CD4-positive, alpha-beta T cell (primary cell): ENCODE measurements at regions of chr20 and their contacts with region 1.

Region 1: GRCh38 chr20:35699127-35699975 is at the starts of genes NFS1 and ROMO1:
- DNase-seq: peak; percentile 77 to 94 (median 82)
- ATAC-seq: peak; percentile 89
- H3K4me3 ChIP-seq: peak within 1 kb of the TSS; percentile 95
- H3K4me3 Mint-ChIP-seq: peak within 1 kb of the TSS; percentile 95
- H3K27ac ChIP-seq: peak within 1 kb of the TSS; percentile 93 to 97
- H3K27ac Mint-ChIP-seq: peak within 1 kb of the TSS; percentile 84
- H3K4me1 ChIP-seq: peaks cover 23% of the 10 kb centered on the region
- H3K4me1 Mint-ChIP-seq: peaks cover 52% of the 10 kb centered on the region
- H3K27me3 ChIP-seq: no peaks in the 10 kb centered on the region
- H3K27me3 Mint-ChIP-seq: no peaks in the 10 kb centered on the region
- CTCF ChIP-seq: peak; percentile 11
- total RNA-seq, gene NFS1: 10.6 to 11.5 TPM
- total RNA-seq, gene ROMO1: 32.9 to 35.8 TPM

Region 2: DNA sequence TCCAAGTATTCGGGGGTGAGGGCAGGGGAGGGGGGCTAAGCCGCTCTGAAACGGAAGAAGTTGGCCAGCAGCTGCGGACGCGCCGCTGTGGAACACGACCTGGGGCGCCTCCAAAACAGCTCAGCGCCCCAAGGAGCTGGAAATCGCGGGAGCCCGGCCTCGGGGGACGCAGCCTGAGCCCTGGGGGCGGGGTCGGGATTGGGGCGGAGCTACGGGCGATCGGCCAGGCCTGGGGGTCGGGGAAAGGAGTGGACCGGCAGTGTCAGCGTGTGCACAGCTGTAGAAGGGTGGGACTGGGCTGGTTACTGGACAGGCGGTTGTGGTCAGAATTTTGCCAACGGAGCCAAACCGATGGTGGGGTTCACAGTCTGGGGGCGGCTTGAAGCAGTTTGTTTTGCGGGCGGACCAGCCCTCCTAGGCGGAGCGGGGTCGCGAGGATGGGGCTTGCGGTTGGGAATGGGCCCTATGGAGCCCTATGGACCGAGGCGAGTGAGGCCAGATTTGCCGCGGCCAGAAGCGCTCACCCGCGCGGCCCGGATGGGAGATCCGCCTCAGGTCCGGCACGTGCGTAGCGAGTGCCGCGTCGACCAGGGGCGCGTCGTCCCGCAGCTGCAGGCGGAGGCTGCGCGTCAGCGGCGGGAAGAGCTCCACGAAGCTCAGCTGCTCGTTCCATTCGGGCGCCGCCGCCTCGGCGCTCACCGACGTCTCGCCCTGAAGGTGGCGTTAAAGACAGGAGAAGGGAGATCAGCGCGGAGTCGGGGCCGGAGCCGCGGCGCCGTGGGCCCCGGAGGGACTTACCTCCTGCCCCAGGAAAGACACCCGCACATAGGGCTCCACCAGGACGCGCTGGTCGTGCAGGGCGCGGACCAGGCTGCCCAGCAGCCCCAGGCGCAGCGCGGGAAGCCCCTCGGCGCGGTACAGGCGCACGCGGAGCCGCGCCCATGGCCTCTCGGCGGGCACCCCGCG is 98.1 kb before region 1 on chr20:
- CTCF ChIA-PET with region 1: interaction called, 5 read pairs
- POLR2A ChIA-PET with region 1: interaction called, 10 read pairs
- intact Hi-C with region 1: loop called (anchors 1 to 2 kb)
- DNase-seq: peak; percentile 65 to 92 (median 76)
- ATAC-seq: peak; percentile 95
- H3K4me3 ChIP-seq: peak overlapping the region; percentile 58
- H3K4me3 Mint-ChIP-seq: peak overlapping the region; percentile 77
- H3K27ac ChIP-seq: no peak overlapping the region
- H3K27ac Mint-ChIP-seq: no peak overlapping the region
- H3K4me1 ChIP-seq: peaks cover 19% of the 10 kb centered on the region
- H3K4me1 Mint-ChIP-seq: peaks cover 14% of the 10 kb centered on the region
- H3K27me3 ChIP-seq: peaks cover 9 to 15% of the 10 kb centered on the region in 2 experiments
- H3K27me3 Mint-ChIP-seq: peaks cover 22% of the 10 kb centered on the region
- CTCF ChIP-seq: peak; percentile 64

Region 3: DNA sequence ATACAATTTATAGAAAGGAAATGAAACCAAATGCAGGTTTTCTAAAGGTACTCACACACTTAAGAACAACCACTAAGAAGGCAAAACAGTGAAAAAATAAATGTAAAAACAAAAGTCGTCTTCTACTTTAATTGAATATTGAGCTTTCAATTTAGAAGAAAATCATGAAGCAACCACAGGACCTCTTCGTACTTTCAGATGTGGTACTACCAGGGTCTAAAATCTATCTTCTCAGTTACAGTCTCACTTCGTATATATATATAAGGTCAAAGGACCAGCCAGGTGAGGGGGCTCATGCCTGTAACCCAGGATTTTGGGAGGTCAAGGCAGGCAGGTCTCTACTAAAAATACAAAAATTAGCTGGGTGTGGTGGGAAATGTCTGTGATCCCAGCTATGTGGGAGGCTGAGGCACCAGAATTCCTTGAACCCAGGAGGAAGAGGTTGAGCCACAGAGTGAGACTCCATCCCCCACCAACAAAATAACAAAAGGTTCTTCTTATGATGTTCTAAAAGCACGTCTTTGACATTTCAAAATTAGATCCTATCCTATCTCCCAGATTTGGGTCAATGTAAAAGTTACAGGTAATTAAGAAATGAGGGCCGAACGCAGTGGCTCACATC is 12.3 kb after region 1 on chr20:
- CTCF ChIA-PET with region 1: interaction called, 8 read pairs
- POLR2A ChIA-PET with region 1: interaction called, 27 read pairs
- intact Hi-C with region 1: no loop called
- DNase-seq: no peak
- ATAC-seq: no peak
- H3K4me3 ChIP-seq: no peak overlapping the region
- H3K4me3 Mint-ChIP-seq: peak overlapping the region; percentile 35
- H3K27ac ChIP-seq: peak overlapping the region in 1 of 2 donors; percentile 38
- H3K27ac Mint-ChIP-seq: peak overlapping the region; percentile 47
- H3K4me1 ChIP-seq: peaks cover 30% of the 10 kb centered on the region
- H3K4me1 Mint-ChIP-seq: peaks cover 69% of the 10 kb centered on the region
- H3K27me3 ChIP-seq: no peaks in the 10 kb centered on the region
- H3K27me3 Mint-ChIP-seq: no peaks in the 10 kb centered on the region
- CTCF ChIP-seq: no peak

Region 4: DNA sequence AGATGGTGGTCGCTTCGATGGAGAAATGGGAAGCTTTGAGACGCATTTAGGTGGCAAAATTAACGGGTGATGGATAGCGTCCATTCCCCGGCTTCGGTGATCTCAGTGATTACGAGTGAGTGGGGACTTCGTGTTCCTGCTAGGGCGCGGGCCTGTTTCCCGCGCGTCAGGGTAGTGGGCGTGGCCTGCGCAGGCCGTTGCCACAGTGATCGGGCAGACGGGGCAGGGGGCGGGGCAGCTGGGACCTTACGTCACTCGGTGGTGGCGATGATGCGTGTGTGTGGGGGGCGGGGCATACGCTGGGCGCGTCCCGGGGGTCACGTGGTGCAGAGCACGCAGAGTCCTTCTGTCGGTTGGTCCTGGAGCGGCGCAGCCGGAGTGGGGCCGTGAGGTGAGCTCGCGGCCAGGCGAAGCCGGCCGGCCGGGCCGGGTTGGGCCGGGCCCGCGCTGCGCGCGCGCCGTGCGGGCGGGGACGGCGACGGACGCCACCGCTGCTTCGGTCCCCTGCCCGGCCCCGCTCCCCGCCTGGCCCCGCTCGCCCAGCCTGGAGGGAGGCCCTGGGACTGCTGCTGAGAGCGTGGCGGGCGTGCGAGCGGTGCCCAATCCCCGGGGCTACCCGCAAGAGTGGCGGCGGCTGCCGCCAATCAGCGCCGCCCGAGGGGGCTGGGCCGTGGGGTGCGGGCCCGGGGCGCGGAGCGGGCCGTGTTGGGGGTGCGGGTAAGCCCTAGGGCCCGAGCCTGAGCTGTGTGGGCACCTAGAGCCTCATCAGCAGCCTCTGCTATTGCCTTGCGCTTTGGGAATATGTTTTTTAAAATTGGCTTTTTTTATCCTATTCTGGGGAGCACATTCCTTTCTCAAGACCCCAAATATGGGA is 72.6 kb after region 1 on chr20 and contains the start of gene PHF20:
- CTCF ChIA-PET with region 1: no interaction called
- POLR2A ChIA-PET with region 1: interaction called, 10 read pairs
- intact Hi-C with region 1: no loop called
- DNase-seq: peak; percentile 100
- ATAC-seq: peak; percentile 84
- H3K4me3 ChIP-seq: peak within 1 kb of the TSS; percentile 79
- H3K4me3 Mint-ChIP-seq: peak within 1 kb of the TSS; percentile 97
- H3K27ac ChIP-seq: peak within 1 kb of the TSS; percentile 86 to 96
- H3K27ac Mint-ChIP-seq: peak within 1 kb of the TSS; percentile 96
- H3K4me1 ChIP-seq: peaks cover 84% of the 10 kb centered on the region
- H3K4me1 Mint-ChIP-seq: peaks cover 75% of the 10 kb centered on the region
- H3K27me3 ChIP-seq: no peaks in the 10 kb centered on the region
- H3K27me3 Mint-ChIP-seq: no peaks in the 10 kb centered on the region
- CTCF ChIP-seq: no peak
- total RNA-seq, gene PHF20: 119 to 126 TPM